HEK293T (cell line): ENCODE measurements at regions of chr5 and their contacts with region 1.

Region 1: DNA sequence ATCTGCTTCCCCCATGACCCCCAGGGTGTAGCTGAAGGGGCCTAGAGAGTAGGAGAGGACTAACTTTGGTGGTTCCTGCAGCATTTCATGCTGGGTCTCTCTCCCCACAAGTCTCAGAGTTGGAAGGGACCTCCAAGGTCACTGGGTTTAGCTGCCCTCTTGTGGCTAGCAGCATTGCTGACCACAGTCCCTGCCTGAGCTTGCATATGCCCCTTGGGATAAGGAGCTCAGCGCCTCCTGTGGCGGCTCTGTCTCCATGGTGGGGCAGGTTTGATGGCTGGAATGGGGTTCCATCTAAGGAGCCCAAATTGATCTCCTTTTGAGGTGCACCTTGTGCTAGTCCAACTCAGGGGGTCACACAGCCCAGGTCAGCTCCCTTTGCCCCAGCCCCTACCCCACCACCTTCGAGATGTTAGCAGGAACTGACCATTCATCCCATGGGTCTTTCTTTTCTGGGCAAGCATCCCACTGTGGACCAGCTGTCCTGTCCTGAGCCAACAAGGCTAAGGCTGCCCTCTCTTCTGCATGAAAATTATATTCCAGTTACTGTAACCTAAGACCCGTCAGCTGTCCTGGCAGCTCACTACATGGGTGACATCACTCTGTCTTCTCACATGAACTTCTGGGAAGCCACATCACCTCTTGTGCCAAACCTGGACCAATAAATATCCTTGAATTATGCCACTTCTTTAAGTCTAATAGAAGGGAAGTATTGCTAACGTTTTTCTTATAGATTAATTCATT is 196.2 kb downstream of the HSPA4 start:
- DNase-seq: peak; percentile 32

Region 2: DNA sequence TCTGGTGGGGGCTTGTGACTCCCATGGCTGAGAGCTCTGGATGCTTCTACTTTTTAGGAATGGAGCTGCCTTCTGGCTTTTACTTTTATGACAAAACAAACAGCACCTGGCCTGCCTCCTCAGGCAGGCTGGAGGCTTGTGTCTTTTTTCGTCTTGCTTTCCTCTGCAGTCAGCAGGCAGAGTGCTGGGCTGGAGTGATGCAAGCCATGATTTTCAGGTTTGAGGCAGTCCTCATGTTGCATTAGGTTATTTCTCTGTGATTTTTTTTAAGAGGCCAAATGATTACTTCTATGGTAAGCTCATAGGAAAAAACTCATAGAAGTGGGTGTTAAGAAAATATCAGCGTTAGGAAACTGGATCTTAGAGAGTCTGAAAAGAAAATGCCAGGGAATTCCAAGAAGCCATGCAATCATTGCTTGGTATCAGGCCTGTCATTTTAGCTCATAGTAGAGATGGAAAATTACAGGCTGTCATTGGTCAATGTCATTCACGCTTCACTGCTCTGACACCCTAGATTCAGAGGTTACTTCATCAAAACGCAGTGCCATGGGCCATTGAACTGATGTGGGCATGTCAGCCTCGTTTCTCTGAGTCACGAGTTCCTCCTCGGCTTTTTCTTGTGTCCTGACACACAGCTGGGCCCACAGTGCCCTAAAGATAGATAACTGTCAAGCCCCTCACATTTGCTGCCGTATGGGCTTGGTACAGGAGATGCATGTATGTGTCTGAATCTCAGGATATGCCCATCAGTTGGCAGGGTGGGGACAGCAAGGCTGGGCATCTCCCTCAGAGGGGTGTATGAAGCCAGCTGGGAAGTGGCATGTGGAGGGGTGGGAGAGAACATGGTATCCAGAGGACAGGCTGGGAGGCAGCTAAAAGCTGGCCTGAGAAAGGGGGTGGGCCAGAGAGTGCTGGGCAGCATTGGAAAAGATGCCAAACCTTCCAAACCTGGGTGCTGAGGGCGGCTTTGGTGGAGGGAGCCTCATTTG is 44.4 kb before region 1 on chr5:
- CTCF ChIA-PET with region 1: no interaction called
- POLR2A ChIA-PET with region 1: no interaction called
- DNase-seq: no peak

Region 3: DNA sequence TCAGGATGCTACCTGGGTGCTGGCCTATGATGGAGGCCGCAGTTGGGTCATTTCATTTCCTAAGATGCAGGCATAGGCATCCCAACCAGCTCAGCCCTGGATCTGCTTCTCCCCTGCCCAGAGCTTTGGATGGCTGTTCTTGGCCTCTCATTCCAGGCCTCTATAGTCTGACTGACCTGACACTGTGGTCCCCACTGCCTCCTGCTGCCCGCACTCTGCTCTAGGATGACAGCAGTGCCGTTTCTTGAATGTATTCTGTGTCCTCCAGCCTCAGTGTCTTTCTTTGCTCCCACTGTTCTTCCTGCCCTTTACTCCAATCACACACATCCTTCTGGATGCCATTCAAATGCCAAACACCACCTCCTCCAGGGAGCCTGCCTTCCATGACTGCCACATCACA is 39.4 kb after region 1 on chr5:
- CTCF ChIA-PET with region 1: interaction called, 10 read pairs
- POLR2A ChIA-PET with region 1: no interaction called
- DNase-seq: peak; percentile 57